Spleen (tissue), 13 donors: ENCODE measurements at regions of chr11 and their contacts with region 1.

Region 1: DNA sequence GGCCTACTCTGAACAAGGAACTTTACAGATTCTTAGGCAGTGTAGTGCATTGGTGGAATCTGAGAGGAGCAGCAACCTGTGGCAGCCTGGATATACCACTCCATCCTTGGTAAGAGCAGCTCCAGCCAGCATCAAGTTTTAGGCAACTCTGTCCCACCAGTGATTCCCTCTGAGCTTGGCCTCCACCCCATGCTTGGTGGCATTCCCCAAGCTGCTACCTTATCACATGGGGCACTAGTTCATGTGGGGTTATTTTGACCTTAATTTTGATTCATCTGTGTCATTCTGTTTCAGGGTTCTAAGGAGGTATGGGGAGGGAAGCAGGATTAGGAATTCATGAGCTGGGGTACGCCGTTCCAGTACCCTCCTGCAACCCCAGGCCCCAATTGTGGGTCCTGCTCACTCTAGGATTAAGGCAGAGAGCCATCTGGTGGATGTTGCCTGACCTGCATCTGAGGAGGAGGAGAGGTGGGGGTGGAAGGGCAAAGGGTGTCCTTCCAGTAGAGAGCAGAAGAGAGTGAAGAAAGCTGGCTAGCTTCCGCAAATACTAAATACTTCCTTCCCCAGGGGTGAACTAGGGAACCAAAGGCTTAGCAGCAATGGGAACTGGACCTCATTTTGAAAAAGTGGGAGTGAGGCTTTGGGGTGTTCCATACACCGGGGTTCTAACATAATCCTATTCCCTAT is 10.5 kb downstream of the LRRC51 start:
- DNase-seq: peak; percentile 86
- H3K4me3 ChIP-seq: peak overlapping the region in 1 of 8 donors; percentile 3
- H3K27ac ChIP-seq: peak overlapping the region in 7 of 8 donors; percentile 47 to 81 (median 76)
- H3K4me1 ChIP-seq: peaks cover 0 to 33% (median 19%) of the 10 kb centered on the region in 6 donors
- H3K27me3 ChIP-seq: no peaks in the 10 kb centered on the region
- CTCF ChIP-seq: peak; percentile 86 to 98 (median 96)
- POLR2A ChIP-seq: no peak

Region 2: DNA sequence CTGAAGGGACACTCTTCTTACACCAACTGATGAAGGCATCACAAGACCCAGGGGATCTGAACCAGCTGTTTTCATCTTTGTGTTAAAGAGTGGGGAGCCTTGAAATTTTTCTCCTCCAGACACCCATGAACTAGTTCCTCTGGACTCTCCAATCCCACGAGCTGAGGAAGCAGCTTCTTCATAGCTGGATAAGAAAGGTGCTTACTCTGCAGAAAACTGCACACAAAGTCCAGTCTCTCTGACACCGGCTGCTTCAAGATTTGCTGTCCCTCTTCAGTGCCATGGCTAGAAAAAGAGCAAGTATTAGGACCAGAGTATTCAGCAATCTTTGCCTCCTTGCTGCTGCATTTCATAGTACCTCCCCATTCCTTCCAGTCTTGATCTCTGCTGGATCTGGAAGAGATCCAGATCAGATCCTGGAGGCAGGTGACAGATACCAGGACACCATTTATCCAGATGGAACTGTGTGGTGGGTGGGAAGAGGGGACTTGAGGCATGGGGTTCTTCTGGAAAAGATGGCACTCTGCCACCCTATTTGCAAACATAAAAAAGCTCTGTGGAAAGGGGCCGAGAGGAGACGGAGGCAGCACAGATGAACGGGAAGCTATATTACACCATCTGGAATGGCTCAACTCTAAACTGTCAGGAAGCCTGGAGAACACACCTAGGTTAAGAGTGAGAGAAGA is 66.9 kb before region 1 on chr11:
- intact Hi-C with region 1: loop called (anchors 2 kb)
- DNase-seq: no peak
- H3K4me3 ChIP-seq: no peak overlapping the region
- H3K27ac ChIP-seq: peak overlapping the region in 2 of 8 donors; percentile 31 to 59
- H3K4me1 ChIP-seq: peaks cover 15 to 61% (median 53%) of the 10 kb centered on the region in 6 donors
- H3K27me3 ChIP-seq: no peaks in the 10 kb centered on the region
- CTCF ChIP-seq: no peak
- POLR2A ChIP-seq: no peak

Region 3: DNA sequence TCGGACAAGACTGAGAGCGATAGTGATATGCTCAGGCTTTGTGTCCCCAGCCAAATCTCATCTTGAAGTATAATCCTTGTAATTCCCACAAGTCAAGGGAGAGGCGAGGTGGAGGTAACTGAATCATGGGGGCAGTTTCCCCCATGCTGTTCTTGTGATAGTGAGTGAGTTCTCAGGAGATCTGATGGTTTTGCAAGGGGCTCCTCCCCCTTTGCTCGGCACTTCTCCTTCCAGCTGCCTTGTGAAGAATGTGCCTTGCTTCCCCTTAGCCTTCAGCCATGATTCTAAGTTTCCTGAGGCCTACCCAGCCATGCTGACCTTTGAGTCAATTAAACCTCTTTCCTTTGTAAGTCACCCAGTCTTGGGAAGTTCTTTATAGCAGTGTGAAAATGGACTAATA is 118.0 kb after region 1 on chr11:
- intact Hi-C with region 1: no loop called
- DNase-seq: no peak
- H3K4me3 ChIP-seq: peak overlapping the region in 3 of 8 donors; percentile 15 to 46 (median 33)
- H3K27ac ChIP-seq: peak overlapping the region in 4 of 8 donors; percentile 13 to 58 (median 49)
- H3K4me1 ChIP-seq: peaks cover 0 to 11% (median 0%) of the 10 kb centered on the region in 6 donors
- H3K27me3 ChIP-seq: no peaks in the 10 kb centered on the region
- CTCF ChIP-seq: no peak
- POLR2A ChIP-seq: no peak